PC-9 (cell line): ENCODE measurements at regions of chr11 and their contacts with region 1.

Region 1: DNA sequence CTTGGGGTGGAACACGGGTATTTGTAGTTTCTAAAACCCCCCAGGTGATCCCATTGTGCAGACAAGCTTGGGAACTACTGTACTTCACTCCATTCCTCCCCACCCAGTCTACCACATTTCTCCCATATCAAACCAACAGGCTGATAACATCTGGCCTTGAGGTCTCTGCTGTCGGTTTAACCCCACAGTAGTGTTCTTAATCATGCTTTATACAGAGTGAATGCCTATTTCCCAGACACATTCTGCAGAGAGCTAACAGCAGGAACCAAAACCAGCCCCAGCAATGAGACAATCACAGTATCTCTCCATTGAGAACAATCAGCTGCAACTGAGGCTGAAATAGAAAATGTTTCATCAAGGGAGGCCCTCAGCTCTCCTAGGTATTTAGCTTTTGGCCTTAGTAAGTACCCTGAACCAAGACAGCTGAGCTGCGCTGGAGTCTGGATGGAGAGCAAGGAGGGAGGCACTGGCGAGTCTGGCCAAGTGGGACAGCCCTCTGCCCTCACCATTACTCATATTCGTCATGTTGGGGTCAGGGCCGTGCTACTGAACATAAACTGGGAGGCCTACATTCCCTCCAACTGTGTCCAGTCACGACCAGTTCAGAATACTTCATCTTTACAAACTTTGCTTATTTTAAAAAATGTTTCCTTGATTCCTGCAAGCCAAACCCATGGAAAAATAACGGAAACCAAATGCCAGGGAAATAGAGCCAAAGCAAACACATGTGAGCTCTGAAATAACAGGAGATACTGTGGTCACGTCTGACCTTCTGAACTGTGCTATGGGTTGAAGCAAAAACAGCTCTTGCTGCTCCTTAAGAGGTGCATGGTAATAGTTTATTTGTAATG is 81.0 kb downstream of the CCDC34 start:
- DNase-seq: no peak
- H3K4me3 ChIP-seq: no peak overlapping the region
- H3K27ac ChIP-seq: no peak overlapping the region
- H3K4me1 ChIP-seq: no peaks in the 10 kb centered on the region
- H3K27me3 ChIP-seq: no peaks in the 10 kb centered on the region
- CTCF ChIP-seq: no peak

Region 2: DNA sequence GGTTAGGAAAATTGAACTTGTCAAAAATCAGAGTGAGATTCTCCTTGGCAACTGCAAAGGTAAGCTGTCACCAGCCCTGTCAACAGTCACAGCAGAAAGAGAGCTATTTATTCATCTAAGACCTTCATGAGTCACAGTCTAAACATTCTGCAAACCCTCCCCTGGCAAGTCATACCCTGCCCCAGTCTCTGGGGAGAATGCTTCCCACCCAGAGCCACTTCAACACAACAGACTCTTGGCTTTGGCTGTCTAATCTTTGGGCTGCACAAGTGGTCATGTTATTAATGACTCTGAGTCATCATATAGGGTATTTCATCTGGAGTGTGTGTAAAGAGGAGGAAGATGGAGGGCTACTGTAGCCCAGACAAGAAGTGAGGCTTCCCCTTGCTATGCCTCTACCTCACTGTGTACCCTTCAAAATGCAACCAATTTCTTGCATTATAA is 72.4 kb before region 1 on chr11:
- CTCF ChIA-PET with region 1: no interaction called
- POLR2A ChIA-PET with region 1: no interaction called
- intact Hi-C with region 1: loop called (anchors 10 kb)
- DNase-seq: peak; percentile 79 to 95
- H3K4me3 ChIP-seq: no peak overlapping the region
- H3K27ac ChIP-seq: peak overlapping the region; percentile 30
- H3K4me1 ChIP-seq: peaks cover 52% of the 10 kb centered on the region
- H3K27me3 ChIP-seq: no peaks in the 10 kb centered on the region
- CTCF ChIP-seq: no peak